Dorsolateral prefrontal cortex (tissue), 120 donors: ENCODE measurements at regions of chr5 and their contacts with region 1.

Region 1: DNA sequence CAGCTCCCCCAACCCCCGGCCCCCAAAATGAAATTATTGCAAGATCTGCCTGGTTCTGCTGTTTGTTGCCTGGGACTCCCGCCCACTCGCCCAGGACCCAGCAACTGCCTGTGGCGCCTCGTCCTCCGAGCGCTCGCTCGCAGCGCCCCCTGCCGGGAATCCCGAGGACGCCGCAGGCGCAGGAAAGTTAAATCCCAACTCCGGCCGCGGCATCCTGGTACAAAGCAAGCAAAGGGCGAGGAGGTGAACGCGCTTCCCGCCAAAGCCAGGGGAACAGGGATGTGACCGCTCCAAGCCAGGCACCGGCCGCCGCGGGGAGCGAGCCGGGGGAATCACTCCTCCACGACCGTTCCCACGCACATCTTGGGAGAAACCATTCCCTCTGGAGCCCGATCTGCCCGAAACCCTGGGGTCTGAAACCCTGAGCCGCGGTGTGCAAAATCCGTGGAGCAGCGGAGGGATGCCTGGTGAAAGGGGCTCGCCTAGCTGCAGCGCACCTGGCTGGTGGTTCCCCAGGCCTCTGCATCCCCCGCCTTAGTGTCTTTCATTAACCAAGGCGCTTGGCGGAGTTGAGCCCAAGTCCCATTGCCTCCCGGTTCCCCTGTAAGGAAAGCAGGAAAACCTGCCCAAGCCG is 1.3 kb downstream of the SEMA5A start:
- DNase-seq: peak; percentile 73 to 91 (median 82)
- H3K4me3 ChIP-seq: peak overlapping the region; percentile 56 to 84 (median 75)
- H3K27ac ChIP-seq: peak overlapping the region in 39 of 59 donors; percentile 2 to 93 (median 62)
- H3K27me3 ChIP-seq: peaks cover 0 to 5% (median 0%) of the 10 kb centered on the region in 45 donors
- CTCF ChIP-seq: peak; percentile 77 to 97 (median 88)

Region 2: GRCh38 chr5:9156282-9156681 is 388.3 kb before region 1 on chr5:
- intact Hi-C with region 1: loop called in 1 of 2 experiments (anchors 5 kb)
- DNase-seq: peak; percentile 15 to 71 (median 52)
- H3K4me3 ChIP-seq: no peak overlapping the region
- H3K27ac ChIP-seq: no peak overlapping the region
- H3K27me3 ChIP-seq: no peaks in the 10 kb centered on the region
- CTCF ChIP-seq: peak in 54 of 56 donors; percentile 30 to 79 (median 60)

Region 3: DNA sequence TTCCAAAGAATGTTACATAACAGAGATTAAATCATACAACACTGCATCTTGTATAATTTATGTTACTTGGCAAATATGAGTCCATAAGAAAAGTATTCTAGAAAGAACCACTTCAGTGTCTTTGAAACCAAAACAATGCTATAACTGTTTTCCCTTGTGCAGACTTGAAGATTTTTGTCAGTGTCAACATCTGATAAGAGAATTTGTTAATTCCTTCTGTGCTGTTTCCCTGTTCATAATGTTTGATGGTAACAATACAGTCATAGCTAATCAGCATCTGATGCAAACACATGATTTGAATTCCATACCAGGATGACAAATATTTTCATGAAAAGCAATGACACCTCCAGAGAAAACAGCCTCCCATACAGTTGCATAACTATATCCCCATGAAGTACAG is 305.5 kb before region 1 on chr5:
- intact Hi-C with region 1: loop called in 1 of 2 experiments (anchors 10 kb)
- DNase-seq: no peak
- H3K4me3 ChIP-seq: no peak overlapping the region
- H3K27ac ChIP-seq: no peak overlapping the region
- H3K27me3 ChIP-seq: no peaks in the 10 kb centered on the region
- CTCF ChIP-seq: no peak

Region 4: DNA sequence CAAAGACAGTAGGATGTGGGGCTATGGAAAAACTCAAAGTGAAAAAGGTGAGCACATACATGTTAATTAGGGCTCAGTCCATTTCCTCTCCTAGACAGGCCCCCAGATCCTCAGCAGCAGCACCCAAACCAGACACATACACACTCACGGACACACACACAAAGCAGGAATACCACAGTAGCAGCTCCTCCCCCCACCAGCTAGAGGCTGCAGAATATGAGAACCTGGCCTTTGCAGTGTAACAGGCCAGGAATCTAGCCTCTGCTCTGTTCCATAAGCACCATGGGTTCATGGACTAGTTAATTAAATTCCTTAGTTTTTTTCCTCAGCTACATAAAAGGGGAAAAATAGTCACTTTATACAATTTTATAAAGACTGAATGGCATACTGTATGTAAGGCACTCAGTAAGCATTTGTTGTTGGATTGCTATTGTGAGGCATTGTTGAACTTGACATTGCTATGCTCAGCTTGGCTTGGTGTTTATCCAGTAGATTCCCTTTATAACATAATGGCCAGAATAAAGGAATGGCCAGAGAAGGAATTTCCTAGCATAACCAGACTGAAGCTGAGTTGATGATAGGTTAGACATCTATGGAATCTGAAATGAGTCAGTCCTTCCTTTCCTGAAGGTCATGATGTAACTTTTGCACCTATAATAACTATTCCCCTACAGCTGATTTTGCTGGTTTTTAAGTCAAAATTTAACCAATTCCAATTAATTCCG is 185.5 kb before region 1 on chr5:
- intact Hi-C with region 1: loop called (anchors 5 kb)
- DNase-seq: no peak
- H3K4me3 ChIP-seq: no peak overlapping the region
- H3K27ac ChIP-seq: no peak overlapping the region
- H3K27me3 ChIP-seq: no peaks in the 10 kb centered on the region
- CTCF ChIP-seq: no peak

Region 5: DNA sequence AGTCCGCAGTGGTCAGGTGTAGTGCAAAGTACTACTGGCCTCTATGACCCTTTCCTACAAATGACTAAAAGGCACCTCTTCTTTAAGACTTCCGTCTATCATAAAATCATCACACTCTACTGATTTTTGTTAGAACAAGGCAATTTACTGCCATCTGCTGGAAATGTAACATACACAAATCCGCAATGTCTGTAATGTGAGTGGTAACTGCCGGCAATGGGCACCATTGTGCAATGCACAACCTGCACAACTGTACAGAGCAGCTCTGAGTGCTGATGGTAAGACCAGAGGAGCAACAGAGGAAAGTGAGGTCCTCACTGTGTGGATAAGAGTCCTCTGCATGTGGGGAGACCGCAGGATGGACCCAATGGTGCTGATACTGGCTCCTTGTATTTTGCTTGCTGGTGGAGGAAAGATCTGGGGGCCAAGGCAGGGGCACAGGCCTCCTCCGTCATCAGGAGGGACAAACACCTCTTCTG is 601.3 kb after region 1 on chr5:
- intact Hi-C with region 1: loop called in 1 of 2 experiments (anchors 10 kb)
- DNase-seq: no peak
- H3K4me3 ChIP-seq: no peak overlapping the region
- H3K27ac ChIP-seq: no peak overlapping the region
- H3K27me3 ChIP-seq: no peaks in the 10 kb centered on the region
- CTCF ChIP-seq: peak in 55 of 56 donors; percentile 30 to 74 (median 56)